AG04450 (cell line): ENCODE measurements at regions of chr2 and their contacts with region 1.

Region 1: DNA sequence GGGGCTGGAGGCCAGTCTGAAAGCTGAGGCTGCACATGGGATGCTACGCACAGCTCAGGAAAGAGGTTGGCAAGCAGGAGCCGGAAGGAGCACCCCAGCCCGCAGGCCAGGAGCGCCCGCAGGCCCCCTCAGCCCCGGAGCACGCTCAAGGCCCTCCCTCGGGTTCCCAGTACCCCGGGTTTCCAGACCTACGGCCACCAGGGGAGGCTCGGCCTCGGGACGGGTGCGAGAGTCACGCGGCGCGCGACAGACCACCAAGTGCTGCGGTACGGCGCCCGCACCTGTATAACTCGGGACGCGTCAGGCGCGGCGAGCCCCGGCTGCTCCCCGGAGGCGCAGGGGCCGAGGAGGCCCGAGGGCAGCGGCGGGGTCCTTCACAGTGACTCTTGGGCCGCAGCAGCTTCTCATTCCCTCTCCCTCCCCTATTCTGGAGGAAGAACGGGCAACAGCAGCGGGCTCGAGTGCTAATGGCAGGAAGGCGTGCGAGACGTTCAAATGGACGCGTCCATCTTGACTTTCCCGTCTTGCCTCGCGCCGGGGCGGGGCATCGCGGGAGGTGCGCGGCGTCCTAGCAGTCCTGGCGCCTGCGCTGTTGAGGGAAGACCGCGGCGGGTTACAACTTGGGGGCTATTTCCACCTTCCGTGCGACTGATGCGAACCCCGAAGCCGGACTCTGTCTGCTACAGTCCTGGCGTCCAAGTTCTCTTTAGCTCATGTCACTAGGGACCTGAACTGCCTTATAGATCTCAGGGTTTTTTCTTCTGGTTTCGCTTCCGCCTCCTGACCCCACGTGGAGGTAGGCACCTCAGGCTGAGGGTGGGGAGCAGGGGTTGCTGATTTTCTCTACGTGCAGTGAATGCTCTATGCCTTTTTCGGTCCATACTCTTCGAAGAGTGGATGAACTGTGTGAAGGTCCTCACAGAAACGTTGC is at the start of gene ANAPC1:
- DNase-seq: peak; percentile 27
- H3K4me3 ChIP-seq: peak within 1 kb of the TSS; percentile 73
- H3K27ac ChIP-seq: peak within 1 kb of the TSS; percentile 33
- H3K27me3 ChIP-seq: no peaks in the 10 kb centered on the region
- CTCF ChIP-seq: no peak
- polyA plus RNA-seq, gene ANAPC1: 21.4 and 27.4 TPM in 2 replicates

Region 2: DNA sequence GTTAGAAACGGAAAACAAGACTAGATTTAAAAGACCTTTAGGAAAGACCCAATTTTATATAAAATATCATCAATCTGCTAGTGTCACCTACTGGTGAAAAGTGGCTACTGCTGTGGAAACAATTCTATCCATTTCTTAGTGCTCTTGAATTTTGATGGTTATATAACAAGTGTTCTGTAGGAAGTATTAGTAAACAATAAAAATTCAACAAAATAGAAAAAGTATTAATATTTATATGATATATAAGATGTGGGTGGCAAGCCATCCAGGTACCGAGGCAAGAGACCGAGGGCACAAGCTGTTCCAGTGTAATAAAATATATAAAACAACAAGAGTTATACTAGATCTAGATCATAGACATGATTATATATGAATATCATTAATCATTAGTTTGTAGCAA is 165.0 kb after region 1 on chr2:
- CTCF ChIA-PET with region 1: interaction called, 103 read pairs
- POLR2A ChIA-PET with region 1: interaction called, 3 read pairs
- DNase-seq: no peak
- H3K4me3 ChIP-seq: no peak overlapping the region
- H3K27ac ChIP-seq: no peak overlapping the region
- H3K27me3 ChIP-seq: peaks cover 8% of the 10 kb centered on the region
- CTCF ChIP-seq: peak; percentile 90